Endothelial cell of umbilical vein (primary cell): ENCODE measurements at regions of chr2 and their contacts with region 1.

Region 1: DNA sequence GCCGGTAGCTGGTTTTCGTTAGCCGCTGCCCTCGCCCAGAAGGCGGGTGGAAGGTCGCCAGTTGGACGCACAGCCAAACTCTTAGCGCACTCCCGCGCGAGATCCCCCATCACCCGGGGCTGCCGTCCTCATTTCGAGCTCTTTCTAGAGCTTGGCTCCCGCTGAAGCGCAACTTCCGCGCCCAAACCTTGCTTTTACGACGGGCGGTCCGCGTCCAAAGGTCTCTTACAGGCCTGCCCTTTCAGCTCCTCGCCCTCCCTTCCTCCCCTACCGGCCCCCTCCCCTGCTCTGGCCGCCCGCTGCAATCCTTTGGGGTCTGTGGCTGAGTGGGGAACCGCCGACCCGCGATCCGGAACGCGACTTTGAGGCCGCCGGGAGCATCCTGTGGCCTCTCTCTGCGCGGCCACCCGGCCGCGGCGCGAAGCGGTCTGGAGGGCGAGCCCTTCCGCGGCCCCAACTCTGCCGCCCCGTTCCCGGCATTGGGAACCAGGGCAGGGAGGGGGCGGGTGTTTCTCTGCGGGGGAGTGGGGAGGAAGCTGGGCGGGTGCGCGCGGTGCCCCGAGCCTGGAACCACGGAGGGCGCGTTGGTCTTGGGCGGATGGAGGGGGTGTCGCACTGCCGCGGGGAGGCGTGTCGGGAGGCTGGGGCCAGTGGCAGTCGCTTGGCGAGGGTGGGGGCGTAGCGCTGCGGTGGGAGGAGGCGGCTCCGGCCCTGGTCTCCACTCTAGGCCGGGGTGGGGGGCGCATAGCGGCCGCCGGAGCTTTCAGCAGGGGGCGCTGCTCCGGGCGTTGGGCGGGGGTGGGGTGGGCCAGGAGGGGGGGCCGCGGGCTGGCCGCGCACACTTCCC is at the start of gene GDF7:
- DNase-seq: peak; percentile 79
- H3K4me3 ChIP-seq: peak within 1 kb of the TSS; percentile 19 to 46 (median 26)
- H3K27ac ChIP-seq: no peak within 1 kb of the TSS
- H3K4me1 ChIP-seq: peaks cover 16% of the 10 kb centered on the region
- H3K27me3 ChIP-seq: peaks cover 58 to 80% of the 10 kb centered on the region in 2 experiments
- CTCF ChIP-seq: peak in 1 of 2 donors; percentile 48
- POLR2A ChIP-seq: no peak
- total RNA-seq, gene GDF7: 1.1 and 3.7 TPM in 2 replicates

Region 2: DNA sequence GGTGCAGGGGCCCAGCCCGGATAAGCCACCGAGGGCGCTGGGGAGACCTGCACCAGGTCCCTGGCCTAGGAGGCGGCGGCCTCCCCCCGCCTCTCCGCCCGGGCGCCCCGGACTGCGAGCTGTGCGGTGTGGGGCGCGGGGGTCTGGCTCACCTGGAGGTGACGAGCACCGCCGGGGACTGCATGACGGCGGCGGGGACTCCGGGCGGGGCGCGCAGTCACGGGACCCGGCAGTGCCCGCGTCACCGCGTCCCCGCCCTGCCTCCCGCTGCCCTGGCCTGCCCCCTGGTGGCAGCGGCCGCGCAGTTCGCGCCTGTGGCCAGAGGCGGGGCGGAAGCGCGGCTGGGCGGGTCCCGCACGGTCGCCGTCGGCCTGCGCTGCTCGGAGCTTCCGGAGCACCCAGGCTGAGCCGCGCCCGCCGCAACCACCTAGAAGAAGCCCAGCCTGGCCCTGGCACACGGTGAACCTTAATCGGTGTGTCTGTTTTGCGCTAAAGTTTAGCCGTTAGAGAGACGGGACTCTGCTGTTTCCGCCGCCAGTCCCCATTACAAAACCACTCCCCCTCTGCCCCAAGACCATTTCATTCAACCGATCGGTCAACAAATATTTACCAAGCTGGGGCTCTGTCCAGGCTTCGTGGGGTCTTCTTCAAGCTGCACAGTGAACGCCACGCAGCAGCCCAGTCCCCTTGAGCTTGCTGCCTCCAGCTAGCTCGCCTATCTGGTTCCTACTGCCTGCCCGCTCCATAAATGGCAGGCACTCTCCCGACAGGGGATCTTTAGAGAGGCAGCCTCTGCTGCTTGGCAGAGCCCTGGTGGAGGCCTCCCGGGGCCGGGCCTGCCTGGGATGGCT is 15.4 kb before region 1 on chr2 and contains the start of gene HS1BP3:
- CTCF ChIA-PET with region 1: interaction called, 20 read pairs
- POLR2A ChIA-PET with region 1: no interaction called
- dilution Hi-C with region 1: no loop called
- intact Hi-C with region 1: no loop called
- DNase-seq: peak; percentile 77
- H3K4me3 ChIP-seq: peak within 1 kb of the TSS; percentile 50 to 95 (median 75)
- H3K27ac ChIP-seq: peak within 1 kb of the TSS; percentile 64
- H3K4me1 ChIP-seq: peaks cover 10% of the 10 kb centered on the region
- H3K27me3 ChIP-seq: peaks cover 9 to 10% of the 10 kb centered on the region in 2 experiments
- CTCF ChIP-seq: peak; percentile 73 to 96
- POLR2A ChIP-seq: peak; percentile 87
- total RNA-seq, gene HS1BP3: 27.8 and 33.1 TPM in 2 replicates

Region 3: DNA sequence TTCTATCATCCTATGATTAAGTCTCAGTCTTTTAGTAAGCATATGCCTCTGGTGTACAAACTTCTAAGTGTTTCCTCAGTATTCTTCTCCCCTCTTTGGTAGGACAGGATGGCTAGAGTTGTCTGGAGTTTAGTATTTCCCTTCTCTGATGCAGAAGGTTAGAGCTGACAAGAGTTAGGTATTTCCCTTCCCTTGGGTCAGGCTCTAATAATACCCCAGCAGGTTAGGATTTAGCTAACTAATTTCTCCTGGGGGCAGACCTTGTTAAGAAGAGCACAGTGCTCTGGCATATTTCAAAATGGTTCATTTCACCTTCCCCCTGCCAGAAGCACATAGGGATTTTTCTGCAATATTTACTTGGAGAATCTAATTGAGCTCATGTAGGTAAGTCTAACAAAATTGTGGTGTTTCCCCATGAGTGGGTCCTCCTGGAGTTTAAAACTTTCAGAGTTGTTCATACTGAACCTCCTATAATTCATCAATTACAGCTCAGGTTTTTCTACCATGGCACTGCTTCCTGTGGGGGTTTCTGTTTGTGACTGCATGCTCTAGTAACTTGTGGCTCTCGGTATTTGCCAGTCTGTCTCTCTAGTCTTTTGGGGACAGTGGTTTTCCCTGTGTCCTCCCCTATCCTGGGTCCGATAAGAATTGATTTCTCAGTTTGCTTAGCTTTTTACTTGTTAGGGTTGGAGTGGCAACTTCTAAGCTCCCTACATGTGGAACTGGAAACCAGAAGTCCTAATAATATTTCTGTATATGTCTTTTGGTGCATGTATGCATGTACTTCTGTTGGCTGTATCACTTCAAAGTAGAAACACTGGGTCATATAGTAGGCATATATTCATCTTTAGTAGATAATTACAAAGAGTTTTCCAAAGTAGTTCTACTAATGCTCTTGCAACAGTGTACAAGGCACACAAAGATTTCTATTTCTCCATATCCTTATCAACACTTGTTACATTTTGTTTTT is 78.1 kb after region 1 on chr2:
- CTCF ChIA-PET with region 1: interaction called, 5 read pairs
- POLR2A ChIA-PET with region 1: no interaction called
- dilution Hi-C with region 1: no loop called
- intact Hi-C with region 1: loop called (anchors 5 kb)
- DNase-seq: no peak
- H3K4me3 ChIP-seq: no peak overlapping the region
- H3K27ac ChIP-seq: no peak overlapping the region
- H3K4me1 ChIP-seq: peaks cover 10% of the 10 kb centered on the region
- H3K27me3 ChIP-seq: no peaks in the 10 kb centered on the region
- CTCF ChIP-seq: no peak
- POLR2A ChIP-seq: no peak

Region 4: GRCh38 chr2:20884829-20885228 is 218.3 kb after region 1 on chr2:
- CTCF ChIA-PET with region 1: no interaction called
- POLR2A ChIA-PET with region 1: no interaction called
- dilution Hi-C with region 1: no loop called
- intact Hi-C with region 1: no loop called
- DNase-seq: no peak
- H3K4me3 ChIP-seq: no peak overlapping the region
- H3K27ac ChIP-seq: no peak overlapping the region
- H3K4me1 ChIP-seq: no peaks in the 10 kb centered on the region
- H3K27me3 ChIP-seq: no peaks in the 10 kb centered on the region
- CTCF ChIP-seq: no peak
- POLR2A ChIP-seq: no peak

Region 5: GRCh38 chr2:21025690-21026478 is 359.4 kb after region 1 on chr2:
- CTCF ChIA-PET with region 1: interaction called, 35 read pairs
- POLR2A ChIA-PET with region 1: no interaction called
- dilution Hi-C with region 1: no loop called
- intact Hi-C with region 1: loop called (anchors 1 kb)
- DNase-seq: no peak
- H3K4me3 ChIP-seq: no peak overlapping the region
- H3K27ac ChIP-seq: no peak overlapping the region
- H3K4me1 ChIP-seq: no peaks in the 10 kb centered on the region
- H3K27me3 ChIP-seq: no peaks in the 10 kb centered on the region
- CTCF ChIP-seq: no peak
- POLR2A ChIP-seq: no peak

Region 6: DNA sequence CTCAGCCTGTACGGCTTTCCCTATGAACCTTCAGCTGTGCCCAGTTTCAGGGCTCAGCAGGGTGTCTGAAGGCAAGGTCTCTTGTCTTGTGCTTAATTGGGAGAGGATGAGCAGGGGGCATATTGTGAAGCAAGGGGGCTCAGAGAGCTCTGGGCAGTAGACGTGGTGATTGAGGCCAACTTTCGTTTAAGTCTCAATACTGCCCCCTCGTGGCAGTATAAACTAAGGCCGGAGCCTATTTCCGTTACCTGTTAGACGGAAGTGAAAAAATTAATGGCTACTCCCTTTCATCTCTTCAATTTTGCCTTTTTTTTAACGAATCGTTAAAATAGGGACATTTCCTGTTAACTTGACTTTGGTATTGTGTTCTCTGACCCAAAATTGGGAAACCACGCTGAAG is 650.6 kb after region 1 on chr2:
- CTCF ChIA-PET with region 1: interaction called, 6 read pairs
- POLR2A ChIA-PET with region 1: no interaction called
- dilution Hi-C with region 1: no loop called
- intact Hi-C with region 1: loop called (anchors 5 kb)
- DNase-seq: peak; percentile 3
- H3K4me3 ChIP-seq: no peak overlapping the region
- H3K27ac ChIP-seq: no peak overlapping the region
- H3K4me1 ChIP-seq: no peaks in the 10 kb centered on the region
- H3K27me3 ChIP-seq: no peaks in the 10 kb centered on the region
- CTCF ChIP-seq: peak; percentile 37 to 44
- POLR2A ChIP-seq: no peak